ENCODE measurements at regions of chr14 and their contacts with region 1.

Region 1: DNA sequence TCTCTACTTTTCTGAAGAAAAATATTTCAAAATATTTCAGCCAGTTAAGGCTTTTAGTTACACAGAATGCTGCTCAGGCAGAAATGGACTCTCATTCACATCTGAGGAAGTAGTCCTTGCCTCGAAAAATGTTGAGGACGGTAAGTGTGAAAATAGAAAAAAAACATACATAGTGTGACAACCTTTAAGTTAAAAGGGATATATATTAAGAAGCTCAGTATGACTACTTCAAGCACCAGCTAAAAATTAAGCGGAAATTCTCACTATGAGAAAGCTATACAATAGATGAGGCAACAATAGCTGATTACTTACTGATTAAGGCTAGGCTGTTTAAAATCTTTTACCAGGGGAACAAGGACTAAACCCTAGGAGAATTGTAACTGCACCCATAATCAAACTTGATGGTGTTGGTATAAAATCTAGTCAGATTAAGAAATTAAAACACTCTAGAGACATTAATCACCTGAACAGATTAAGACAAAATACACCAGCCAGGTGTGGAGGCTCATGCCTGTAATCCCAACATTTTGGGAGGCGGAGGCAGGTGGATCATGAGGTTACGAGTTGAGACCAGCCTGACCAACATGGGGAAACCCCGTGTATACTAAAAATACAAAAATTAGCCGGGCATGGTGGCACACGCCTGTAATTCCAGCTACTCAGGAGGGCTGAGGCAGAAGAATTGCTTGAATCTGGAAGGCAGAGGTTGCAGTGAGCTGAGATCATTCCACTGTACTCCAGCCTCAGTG is 53.9 kb downstream of the HNRNPC start:
- DNase-seq: no peak
- H3K4me3 ChIP-seq: no peak overlapping the region
- H3K27ac ChIP-seq: no peak overlapping the region
- H3K4me1 ChIP-seq: peaks cover 3% of the 10 kb centered on the region
- H3K27me3 ChIP-seq: no peaks in the 10 kb centered on the region
- CTCF ChIP-seq: no peak
- EP300 ChIP-seq: no peak
- POLR2A ChIP-seq: no peak

Region 2: GRCh38 chr14:21269252-21270046 is 54.1 kb after region 1 on chr14 and contains the start of gene HNRNPC:
- intact Hi-C with region 1: loop called in 1 of 4 experiments (anchors 10 kb)
- DNase-seq: peak; percentile 100
- H3K4me3 ChIP-seq: peak within 1 kb of the TSS; percentile 90
- H3K27ac ChIP-seq: peak within 1 kb of the TSS; percentile 91 to 93
- H3K4me1 ChIP-seq: peaks cover 7% of the 10 kb centered on the region
- H3K27me3 ChIP-seq: no peaks in the 10 kb centered on the region
- CTCF ChIP-seq: no peak
- EP300 ChIP-seq: no peak
- POLR2A ChIP-seq: peak; percentile 98
- total RNA-seq, gene HNRNPC: 427 to 633 (median 479) TPM

Measured in ovary (tissue), 10 donors.